ENCODE measurements at regions of chr13 and their contacts with region 1.

Region 1: GRCh38 chr13:106536244-106537034 is 977 bp upstream of the EFNB2 start:
- DNase-seq: peak; percentile 85 to 99 (median 96)

Region 2: DNA sequence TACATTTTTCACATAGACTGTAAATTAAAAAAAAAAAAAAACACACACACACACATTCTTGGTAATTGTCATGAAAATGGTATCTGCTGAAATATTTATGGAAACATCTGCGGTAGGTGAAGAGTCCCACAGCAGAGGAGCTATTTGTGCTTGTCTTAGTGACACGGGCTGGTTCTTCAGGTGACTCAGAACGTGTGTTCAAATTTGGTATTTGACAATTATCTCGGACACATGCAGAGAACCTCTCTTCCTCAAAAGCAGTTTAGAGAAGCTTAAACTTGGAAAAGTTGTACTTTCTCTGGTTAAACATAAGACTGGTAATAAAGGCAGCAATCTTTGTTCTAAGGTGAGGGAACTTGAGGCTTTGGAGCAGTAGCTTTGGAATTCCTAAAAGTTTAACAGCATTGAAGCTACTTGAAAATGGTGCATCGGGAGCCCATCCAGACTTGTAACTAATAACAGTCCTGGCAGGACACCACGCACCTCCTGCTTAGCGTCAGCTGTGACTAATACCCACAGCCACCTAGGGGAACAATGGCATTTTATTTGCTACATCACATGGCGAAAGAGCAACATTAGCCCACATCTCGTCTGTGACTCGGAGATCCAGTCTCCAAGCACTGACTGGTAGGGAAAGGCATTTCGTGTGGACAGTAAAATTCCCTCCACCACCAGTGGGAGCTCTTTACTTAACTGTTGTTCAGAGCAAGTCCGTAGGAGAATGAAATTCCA is 1965.1 kb before region 1 on chr13:
- intact Hi-C with region 1: loop called (anchors 2 kb)
- DNase-seq: peak in 9 of 10 donors; percentile 28 to 90 (median 71)

Region 3: DNA sequence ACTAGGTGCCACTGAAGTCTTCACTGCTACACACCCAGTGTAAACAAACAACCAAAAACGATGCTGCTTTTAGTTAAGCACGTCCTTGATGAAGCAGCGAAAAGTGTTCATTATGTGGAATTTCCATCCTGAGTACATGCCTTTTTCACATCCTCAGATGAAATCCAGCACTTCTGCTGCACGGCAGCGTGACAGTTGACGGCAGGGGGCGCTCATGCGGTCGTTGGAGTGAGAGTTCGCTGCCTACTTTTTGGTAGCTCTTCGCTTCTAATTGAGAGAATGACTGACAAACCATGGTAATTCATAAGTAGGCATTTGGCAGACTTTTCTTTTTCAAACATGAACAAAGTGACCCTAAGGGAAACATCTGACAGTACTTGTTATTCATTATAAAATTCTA is 1125.8 kb before region 1 on chr13:
- intact Hi-C with region 1: loop called (anchors 5 kb)
- DNase-seq: peak in 9 of 10 donors; percentile 37 to 91 (median 74)

Region 4: DNA sequence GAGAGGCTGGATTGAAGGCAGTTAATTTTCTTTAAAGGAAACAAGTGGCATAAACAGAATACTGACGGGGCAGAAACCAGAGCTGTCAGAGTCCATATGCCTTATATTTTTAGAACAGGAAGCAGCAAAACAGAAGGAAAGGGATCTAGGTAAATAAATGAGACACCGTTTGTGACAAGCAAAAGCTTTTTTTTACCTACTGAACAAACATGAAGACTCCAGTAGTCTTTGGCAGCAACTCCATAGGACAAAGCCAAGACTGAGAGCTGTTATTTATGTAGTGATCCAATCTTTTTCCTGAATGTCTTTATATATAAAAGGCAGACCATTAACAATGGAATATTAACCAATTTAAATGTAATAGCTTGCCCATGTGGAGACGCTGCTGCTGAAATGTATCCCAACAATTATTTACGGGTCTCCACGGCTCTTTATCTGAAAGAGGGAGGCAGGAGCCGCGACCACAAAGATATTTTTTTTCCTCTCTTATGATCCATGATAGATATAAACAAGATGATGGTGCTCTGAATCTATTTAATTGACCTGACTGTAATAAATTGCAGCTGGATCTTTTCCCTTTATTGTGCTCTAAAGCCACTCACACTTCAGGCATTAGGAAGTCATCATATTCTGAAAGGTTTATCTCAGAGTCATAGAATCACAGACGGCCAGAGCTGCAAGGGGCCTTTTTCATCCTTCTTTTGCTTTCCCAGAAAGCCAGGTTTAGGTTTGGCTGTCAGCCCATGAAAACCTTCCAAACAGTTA is 688.7 kb before region 1 on chr13:
- intact Hi-C with region 1: no loop called
- DNase-seq: no peak

Region 5: GRCh38 chr13:106083620-106084350 is 452.7 kb before region 1 on chr13:
- intact Hi-C with region 1: loop called (anchors 5 kb)
- DNase-seq: peak in 4 of 10 donors; percentile 20 to 49 (median 42)

Region 6: GRCh38 chr13:106234636-106235035 is 301.8 kb before region 1 on chr13:
- intact Hi-C with region 1: no loop called
- DNase-seq: no peak

Region 7: DNA sequence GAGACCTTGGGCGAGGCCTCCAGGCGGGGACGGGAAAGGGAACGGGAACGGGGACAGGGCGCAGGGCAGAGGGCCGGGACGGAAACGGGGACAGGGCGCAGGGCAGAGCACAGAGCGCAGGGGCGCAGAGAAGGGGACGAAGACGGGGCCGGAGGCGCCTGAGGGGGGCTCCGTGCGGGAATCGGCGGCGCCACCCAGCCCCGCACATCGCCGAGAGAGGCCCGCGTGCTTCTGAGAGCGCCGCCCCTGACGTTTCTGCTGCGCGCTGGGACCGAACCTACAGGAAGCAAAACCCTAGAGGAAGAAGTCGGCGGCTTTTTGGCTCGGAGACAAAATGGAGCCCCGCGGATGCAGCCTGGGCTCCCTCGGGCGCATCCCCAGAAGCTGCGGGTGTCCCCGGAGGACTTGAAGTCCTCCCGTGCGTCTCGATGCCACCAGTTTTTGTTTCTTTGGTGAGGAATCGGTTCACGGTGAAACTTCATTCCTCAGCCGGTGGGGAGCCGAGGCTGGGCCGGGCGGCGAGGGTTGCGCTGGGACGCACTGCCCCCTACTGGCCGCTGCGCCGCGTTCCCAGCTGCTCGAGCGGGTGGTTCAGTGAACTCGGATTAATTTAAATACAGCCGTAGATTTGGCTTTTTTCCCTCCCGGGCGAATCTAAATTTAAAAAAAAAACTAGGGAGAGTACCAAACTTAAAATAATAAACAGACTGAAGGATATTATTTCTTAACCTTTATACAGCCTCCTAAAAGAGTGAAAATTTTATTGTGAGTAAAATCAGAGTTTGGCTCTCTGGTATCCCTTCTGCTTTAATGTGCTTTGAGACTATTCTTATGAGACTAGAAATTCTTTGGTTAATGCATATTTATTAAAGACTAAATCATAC is 381.5 kb after region 1 on chr13:
- intact Hi-C with region 1: loop called (anchors 1 kb)
- DNase-seq: peak; percentile 74 to 97 (median 84)